Activated naive CD4-positive, alpha-beta T cell treated with anti-CD3 and anti-CD28 coated beads for 36 hours (primary cell): ENCODE measurements at regions of chr4 and their contacts with region 1.

Region 1: DNA sequence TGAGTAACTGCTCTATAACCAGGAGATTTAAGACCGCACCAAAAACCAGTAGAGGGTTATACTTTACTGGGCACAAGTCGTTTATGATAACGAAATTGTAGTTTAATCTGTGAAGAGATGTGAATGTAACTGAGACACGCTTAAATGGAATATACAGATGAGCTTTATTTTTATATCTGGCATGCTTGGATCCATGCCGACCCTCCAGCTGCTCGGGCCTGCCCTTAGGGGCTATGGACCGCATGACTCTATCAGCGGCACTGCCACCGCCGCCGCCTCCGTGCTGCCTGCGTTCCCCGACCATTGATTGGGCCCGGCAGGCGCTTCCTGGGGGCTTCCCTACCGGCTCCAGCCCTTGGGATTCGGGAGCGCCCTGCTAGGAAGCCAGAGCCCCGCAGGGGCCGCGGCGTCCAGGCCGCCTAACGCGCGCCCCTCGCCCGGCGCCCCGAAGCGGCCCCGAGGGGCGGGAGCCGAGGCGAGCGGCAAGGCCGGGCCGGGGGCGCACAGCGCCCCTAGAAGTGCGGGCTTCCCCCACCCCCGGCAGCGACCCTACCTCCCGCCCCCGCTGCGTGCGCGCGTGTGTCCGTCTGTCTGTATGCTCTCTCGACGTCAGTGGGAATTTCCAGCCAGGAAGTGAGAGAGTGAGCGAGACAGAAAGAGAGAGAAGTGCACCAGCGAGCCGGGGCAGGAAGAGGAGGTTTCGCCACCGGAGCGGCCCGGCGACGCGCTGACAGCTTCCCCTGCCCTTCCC is at the start of gene NFKB1:
- DNase-seq: peak; percentile 90
- H3K4me3 Mint-ChIP-seq: peak within 1 kb of the TSS; percentile 96
- H3K27ac Mint-ChIP-seq: peak within 1 kb of the TSS; percentile 96
- H3K4me1 Mint-ChIP-seq: peaks cover 16% of the 10 kb centered on the region
- H3K27me3 Mint-ChIP-seq: no peaks in the 10 kb centered on the region
- total RNA-seq, gene NFKB1: 121 to 134 TPM

Region 2: DNA sequence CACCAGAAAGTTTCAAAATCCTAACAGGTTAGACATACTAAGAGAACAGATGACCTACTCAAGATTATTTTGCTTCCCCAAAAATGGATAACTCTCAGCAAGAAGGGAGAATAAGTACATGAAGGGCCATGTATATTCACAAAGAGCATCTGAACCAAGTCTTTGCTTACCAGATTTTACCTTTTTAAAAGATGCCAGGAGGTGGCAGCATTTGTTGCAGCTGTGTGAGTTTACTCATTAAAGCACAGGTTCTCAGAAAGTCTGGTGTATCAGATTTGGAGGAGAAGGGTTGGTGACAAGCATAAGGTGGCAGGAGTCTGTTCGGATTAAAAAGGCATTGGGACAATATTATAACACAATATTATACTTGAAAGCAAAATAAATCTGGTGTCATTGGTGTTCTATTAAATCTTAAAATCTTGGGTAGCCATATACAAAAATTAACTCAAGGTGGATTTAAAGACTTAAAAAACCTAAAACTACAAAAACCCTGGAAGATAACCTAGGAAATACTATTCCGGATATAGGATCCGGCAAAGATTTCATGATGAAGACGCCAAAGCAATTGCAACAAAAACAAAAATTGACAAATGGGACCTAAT is 51.0 kb before region 1 on chr4:
- CTCF ChIA-PET with region 1: interaction called, 5 read pairs
- intact Hi-C with region 1: loop called (anchors 2 kb)
- DNase-seq: peak; percentile 76
- H3K4me3 Mint-ChIP-seq: no peak overlapping the region
- H3K27ac Mint-ChIP-seq: no peak overlapping the region
- H3K4me1 Mint-ChIP-seq: peaks cover 18% of the 10 kb centered on the region
- H3K27me3 Mint-ChIP-seq: no peaks in the 10 kb centered on the region

Region 3: GRCh38 chr4:102472441-102473013 is 28.3 kb before region 1 on chr4:
- CTCF ChIA-PET with region 1: no interaction called
- intact Hi-C with region 1: no loop called
- DNase-seq: no peak
- H3K4me3 Mint-ChIP-seq: no peak overlapping the region
- H3K27ac Mint-ChIP-seq: no peak overlapping the region
- H3K4me1 Mint-ChIP-seq: peaks cover 25% of the 10 kb centered on the region
- H3K27me3 Mint-ChIP-seq: no peaks in the 10 kb centered on the region

Region 4: DNA sequence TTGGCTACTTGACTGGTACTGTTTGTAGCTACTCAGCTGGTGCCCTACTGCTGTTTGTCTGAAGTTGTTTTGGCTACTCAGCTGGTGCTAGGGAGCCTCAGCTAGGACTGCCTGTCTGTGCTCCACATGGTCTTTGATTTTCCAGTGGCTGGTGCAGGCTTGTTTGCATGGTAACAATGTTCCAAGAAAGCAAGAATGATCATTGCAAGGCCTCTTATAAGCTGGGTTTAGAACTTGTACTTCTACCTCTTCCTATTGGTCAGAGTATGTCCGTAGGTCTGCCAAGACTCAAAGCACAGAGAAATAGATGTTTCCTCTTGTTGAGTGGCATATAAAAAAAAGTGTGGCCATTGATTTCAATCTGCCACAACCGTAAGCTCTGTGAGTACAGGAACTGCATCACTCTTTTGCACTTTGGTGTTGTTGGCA is 17.8 kb after region 1 on chr4:
- CTCF ChIA-PET with region 1: interaction called, 6 read pairs
- intact Hi-C with region 1: loop called (anchors 1 kb)
- DNase-seq: no peak
- H3K4me3 Mint-ChIP-seq: peak overlapping the region; percentile 53
- H3K27ac Mint-ChIP-seq: peak overlapping the region; percentile 84
- H3K4me1 Mint-ChIP-seq: peaks cover 88% of the 10 kb centered on the region
- H3K27me3 Mint-ChIP-seq: no peaks in the 10 kb centered on the region

Region 5: DNA sequence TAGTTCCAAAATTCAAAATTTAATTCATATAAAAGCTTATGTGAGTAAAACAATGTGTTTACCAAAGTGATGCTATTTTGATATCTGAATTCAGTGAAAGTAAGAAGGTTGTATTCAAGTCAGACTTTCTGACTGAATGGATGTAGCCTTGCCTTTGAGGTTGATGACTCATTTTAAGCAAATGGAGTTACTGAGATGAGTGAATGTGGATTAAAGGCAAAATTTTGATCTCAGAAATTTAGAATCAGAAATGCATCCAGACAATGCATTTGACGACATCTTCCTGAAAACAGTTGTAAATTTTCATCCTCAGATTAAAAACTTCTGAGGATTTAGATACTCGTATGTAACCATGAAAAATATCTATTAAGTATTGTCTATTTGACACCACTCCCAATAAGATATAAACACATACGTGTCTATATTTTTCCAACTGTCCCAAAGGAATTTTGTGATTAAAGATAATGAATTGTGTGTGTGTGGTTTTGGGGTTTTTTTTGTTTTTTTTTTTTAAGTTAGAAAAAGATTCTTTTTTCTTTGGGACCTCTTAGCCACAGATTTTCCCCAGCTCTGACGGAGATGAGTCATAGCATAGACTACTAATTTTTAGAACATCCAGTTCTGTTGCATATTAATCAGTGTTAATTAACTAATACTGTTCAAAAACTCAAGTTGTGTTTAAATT is 34.7 kb after region 1 on chr4:
- CTCF ChIA-PET with region 1: interaction called, 3 read pairs
- intact Hi-C with region 1: loop called (anchors 1 kb)
- DNase-seq: no peak
- H3K4me3 Mint-ChIP-seq: no peak overlapping the region
- H3K27ac Mint-ChIP-seq: peak overlapping the region; percentile 65
- H3K4me1 Mint-ChIP-seq: peaks cover 72% of the 10 kb centered on the region
- H3K27me3 Mint-ChIP-seq: no peaks in the 10 kb centered on the region

Region 6: DNA sequence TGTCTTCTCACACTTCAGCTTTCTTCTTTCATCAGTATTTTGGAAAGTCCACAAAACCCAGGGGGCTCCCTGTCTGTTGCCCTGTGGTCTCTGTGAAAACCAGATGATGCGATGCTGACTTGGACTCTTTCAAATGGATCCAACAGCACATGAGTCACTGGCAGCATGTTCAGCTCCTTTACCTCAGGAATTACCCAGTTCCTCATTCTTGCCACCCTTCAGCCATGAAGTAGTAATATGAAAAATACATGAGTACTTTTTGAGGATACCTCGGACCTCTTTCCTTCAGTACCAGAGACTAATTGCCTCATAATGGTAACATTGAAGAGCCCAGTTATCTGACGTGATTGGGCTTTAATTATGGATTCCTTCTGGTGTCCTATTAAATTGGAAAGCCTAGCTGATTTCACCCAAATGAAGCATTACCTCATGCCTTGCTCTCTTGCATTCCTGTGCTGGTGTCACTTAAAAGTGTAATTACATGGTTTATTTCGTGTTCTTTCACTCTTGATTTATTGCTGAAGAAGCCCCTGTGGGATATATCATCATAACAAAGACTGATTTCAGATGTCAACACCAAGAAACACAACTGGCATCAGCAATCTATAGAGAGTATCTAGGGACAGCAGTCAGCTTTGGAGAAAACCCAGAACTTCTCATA is 63.7 kb after region 1 on chr4:
- CTCF ChIA-PET with region 1: interaction called, 4 read pairs
- intact Hi-C with region 1: loop called (anchors 2 kb)
- DNase-seq: peak; percentile 66
- H3K4me3 Mint-ChIP-seq: no peak overlapping the region
- H3K27ac Mint-ChIP-seq: peak overlapping the region; percentile 75
- H3K4me1 Mint-ChIP-seq: peaks cover 78% of the 10 kb centered on the region
- H3K27me3 Mint-ChIP-seq: no peaks in the 10 kb centered on the region

Region 7: GRCh38 chr4:102598086-102598761 is 97.4 kb after region 1 on chr4:
- CTCF ChIA-PET with region 1: no interaction called
- intact Hi-C with region 1: no loop called
- DNase-seq: peak; percentile 36
- H3K4me3 Mint-ChIP-seq: peak overlapping the region; percentile 25
- H3K27ac Mint-ChIP-seq: peak overlapping the region; percentile 88
- H3K4me1 Mint-ChIP-seq: peaks cover 67% of the 10 kb centered on the region
- H3K27me3 Mint-ChIP-seq: no peaks in the 10 kb centered on the region

Region 8: GRCh38 chr4:102612824-102613366 is 112.0 kb after region 1 on chr4:
- CTCF ChIA-PET with region 1: interaction called, 4 read pairs
- intact Hi-C with region 1: loop called (anchors 1 kb)
- DNase-seq: peak; percentile 75
- H3K4me3 Mint-ChIP-seq: peak overlapping the region; percentile 48
- H3K27ac Mint-ChIP-seq: peak overlapping the region; percentile 89
- H3K4me1 Mint-ChIP-seq: peaks cover 78% of the 10 kb centered on the region
- H3K27me3 Mint-ChIP-seq: no peaks in the 10 kb centered on the region

Region 9: GRCh38 chr4:102868781-102869568 is 368.1 kb after region 1 on chr4 and contains the start of gene CISD2:
- CTCF ChIA-PET with region 1: no interaction called
- intact Hi-C with region 1: loop called (anchors 2 kb)
- DNase-seq: peak; percentile 95
- H3K4me3 Mint-ChIP-seq: peak within 1 kb of the TSS; percentile 94
- H3K27ac Mint-ChIP-seq: peak within 1 kb of the TSS; percentile 97
- H3K4me1 Mint-ChIP-seq: peaks cover 51% of the 10 kb centered on the region
- H3K27me3 Mint-ChIP-seq: no peaks in the 10 kb centered on the region
- total RNA-seq, gene CISD2: 25.1 to 25.7 TPM